ENCODE measurements at regions of chr20 and their contacts with region 1.

Region 1: DNA sequence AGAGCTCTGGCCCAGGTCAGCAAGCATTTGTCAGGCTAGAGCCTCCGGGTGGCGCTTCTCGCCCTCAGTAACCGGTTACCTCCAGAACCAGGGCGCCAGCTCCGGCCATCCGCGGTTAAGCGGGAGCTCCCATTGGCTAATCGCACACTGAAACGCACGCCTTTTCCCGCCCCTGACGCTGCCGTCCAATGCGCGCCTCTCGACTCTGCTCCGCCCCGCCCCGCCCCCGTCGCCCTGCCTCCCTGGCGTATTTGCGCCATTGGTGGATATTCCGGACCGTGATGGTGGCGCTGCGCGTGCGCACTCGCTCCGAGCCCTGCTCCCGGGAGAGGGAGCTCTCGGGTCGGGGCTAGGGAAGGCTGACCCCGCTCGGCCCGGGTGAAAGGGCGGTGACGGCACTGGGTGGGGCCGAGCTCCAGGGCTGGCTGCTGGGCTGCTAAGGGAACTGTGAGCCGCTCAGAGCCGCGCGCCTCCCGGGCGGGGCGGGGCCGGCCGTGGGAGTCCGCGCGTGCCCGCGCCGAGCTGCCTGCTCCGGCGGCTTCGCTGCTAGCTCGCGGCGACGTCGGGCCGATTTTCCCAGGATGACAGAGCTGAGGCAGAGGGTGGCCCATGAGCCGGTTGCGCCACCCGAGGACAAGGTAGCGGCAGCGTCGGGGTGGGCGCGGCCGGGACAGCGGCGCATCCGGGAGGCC is at the start of gene CDS2:
- DNase-seq: peak; percentile 100
- H3K4me3 ChIP-seq: peak within 1 kb of the TSS; percentile 68 to 89 (median 79)
- H3K27ac ChIP-seq: peak within 1 kb of the TSS; percentile 91 to 97 (median 92)
- H3K4me1 ChIP-seq: peaks cover 13 to 14% of the 10 kb centered on the region in 2 donors
- H3K27me3 ChIP-seq: no peaks in the 10 kb centered on the region
- CTCF ChIP-seq: peak in 5 of 6 experiments; percentile 24 to 61 (median 57)
- POLR2A ChIP-seq: peak in 1 of 2 donors; percentile 79
- total RNA-seq, gene CDS2: 34.0 to 55.4 (median 40.9) TPM

Region 2: DNA sequence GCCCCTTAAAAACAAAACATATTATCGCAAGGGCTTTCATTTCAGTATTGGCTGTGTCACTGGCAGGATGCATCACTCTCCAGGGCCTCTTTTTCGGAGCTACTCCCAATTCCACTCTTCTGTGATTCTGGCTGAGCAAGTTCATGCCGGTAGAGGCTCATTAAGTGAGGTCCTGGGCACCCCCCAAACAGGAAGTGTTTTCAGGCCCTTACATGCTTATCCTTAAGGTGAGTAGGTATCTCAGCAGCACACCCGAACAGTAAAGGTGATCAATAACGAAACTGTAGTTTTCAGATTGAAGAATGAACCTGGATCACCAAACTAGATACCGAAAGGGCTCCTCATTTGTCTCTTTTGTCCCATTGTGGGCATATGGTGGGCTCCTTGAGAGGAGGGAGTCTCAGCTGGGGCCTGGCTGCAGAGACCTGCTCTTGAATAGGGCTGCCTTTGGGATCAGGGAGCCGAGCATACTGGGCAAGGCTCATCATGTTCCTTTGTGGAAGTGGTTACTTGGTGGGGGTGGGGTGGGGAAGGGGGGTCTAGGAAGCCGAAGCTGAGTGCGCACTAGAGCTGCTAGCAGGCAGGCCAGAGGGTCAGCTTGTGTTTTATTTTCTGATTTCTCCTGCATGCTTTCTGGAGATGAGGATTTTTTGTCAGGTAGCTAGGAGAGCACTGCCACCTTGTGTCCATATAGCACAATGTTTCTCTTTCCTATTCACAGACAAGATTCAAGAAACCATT is 65.3 kb after region 1 on chr20:
- intact Hi-C with region 1: loop called (anchors 5 kb)
- DNase-seq: peak; percentile 36 to 40
- H3K4me3 ChIP-seq: no peak overlapping the region
- H3K27ac ChIP-seq: peak overlapping the region in 1 of 3 donors; percentile 47
- H3K4me1 ChIP-seq: no peaks in the 10 kb centered on the region
- H3K27me3 ChIP-seq: no peaks in the 10 kb centered on the region
- CTCF ChIP-seq: peak in 5 of 6 experiments; percentile 64 to 87 (median 73)
- POLR2A ChIP-seq: no peak